Head of caudate nucleus (tissue), 42 donors: ENCODE measurements at regions of chr17 and their contacts with region 1.

Region 1: GRCh38 chr17:50865984-50866774 is at the start of gene TOB1:
- DNase-seq: peak; percentile 91 to 99 (median 98)

Region 2: DNA sequence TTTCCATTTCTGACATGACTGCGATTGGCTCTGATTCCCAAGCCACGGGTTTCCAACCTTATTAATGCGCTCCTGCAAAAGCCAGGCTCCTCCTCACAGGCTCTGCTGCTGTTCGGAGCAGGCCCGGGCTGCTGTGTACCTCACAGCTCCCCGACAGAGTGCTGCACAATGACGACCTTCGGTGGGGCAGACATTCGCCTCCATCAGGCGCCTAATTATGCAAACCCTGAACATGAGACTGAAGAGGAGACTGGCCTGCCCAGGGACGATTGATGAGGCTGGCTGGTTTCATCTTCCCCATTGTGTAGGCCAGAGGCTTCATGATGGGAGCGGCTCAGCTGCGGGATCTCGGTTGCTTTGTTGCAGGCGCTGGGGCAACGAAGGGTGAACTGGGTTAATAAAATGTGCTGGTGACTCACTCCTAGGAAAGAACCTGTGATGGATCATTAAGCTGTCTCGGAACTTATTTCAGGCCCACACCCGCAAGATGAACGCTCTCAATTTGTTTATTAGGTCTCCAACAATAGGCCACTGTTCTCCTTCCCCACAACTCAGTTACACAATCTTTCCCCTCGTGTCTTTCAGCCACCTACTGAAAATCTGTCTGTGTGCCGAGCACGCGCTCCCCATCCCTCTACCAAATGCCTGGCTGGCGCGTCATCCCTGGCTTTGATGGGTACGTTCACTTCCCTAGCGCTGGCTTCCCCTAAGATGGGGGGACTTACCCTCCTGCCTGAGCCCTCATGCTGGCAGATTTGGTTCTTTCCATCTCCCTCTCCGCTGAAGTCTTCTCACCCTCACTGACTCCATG is 27.2 kb after region 1 on chr17:
- intact Hi-C with region 1: loop called (anchors 2 kb)
- DNase-seq: peak; percentile 65 to 95 (median 85)

Region 3: GRCh38 chr17:50931144-50931908 is 65.1 kb after region 1 on chr17:
- intact Hi-C with region 1: loop called (anchors 2 kb)
- DNase-seq: peak; percentile 78 to 96 (median 91)